WTC11 (cell line): ENCODE measurements at regions of chr5 and their contacts with region 1.

Region 1: DNA sequence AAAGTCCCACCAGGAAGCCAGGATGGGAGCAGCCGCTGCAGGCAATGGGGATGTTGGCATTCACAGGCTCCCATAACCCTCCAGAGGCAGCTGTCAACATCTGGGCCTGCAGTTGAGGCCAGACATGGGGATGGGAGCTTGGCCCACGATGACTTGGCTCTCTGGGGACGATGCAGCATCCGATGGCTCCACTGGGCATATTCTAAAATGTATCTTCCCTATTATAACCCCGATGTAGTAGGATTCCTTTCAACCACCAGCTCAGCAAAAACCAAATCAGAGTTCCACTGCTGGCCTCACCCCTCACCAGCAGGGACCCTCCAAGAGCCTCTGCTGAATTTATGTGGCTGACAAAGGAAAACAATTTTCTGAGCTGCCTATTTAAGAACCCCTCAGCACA is 7.1 kb downstream of the SPRY4 start:
- DNase-seq: no peak
- ATAC-seq: no peak
- H3K4me3 Mint-ChIP-seq: peak overlapping the region; percentile 96
- H3K27ac Mint-ChIP-seq: peak overlapping the region; percentile 93
- H3K4me1 Mint-ChIP-seq: peaks cover 93% of the 10 kb centered on the region
- H3K27me3 Mint-ChIP-seq: no peaks in the 10 kb centered on the region; the same call in 1 of the 2 replicates
- CTCF ChIP-seq: no peak

Region 2: GRCh38 chr5:142306077-142306502 is 11.7 kb before region 1 on chr5:
- CTCF ChIA-PET with region 1: interaction called, 11 read pairs
- POLR2A ChIA-PET with region 1: interaction called, 3 read pairs
- DNase-seq: no peak
- ATAC-seq: no peak
- H3K4me3 Mint-ChIP-seq: no peak overlapping the region
- H3K27ac Mint-ChIP-seq: peak overlapping the region; percentile 75
- H3K4me1 Mint-ChIP-seq: peaks cover 65% of the 10 kb centered on the region
- H3K27me3 Mint-ChIP-seq: no peaks in the 10 kb centered on the region
- CTCF ChIP-seq: no peak